Caco-2 (cell line): ENCODE measurements at regions of chr17 and their contacts with region 1.

Region 1: GRCh38 chr17:13297183-13297582 is 279.4 kb upstream of the ELAC2 start:
- DNase-seq: peak; percentile 76 to 82
- H3K4me3 ChIP-seq: no peak overlapping the region
- H3K4me3 Mint-ChIP-seq: peak overlapping the region; percentile 19
- H3K27ac Mint-ChIP-seq: peak overlapping the region; percentile 72
- H3K4me1 ChIP-seq: peaks cover 14% of the 10 kb centered on the region; the same call in 1 of the 2 replicates
- H3K4me1 Mint-ChIP-seq: peaks cover 7% of the 10 kb centered on the region
- H3K27me3 ChIP-seq: no peaks in the 10 kb centered on the region
- H3K27me3 Mint-ChIP-seq: no peaks in the 10 kb centered on the region
- CTCF ChIP-seq: no peak

Region 2: DNA sequence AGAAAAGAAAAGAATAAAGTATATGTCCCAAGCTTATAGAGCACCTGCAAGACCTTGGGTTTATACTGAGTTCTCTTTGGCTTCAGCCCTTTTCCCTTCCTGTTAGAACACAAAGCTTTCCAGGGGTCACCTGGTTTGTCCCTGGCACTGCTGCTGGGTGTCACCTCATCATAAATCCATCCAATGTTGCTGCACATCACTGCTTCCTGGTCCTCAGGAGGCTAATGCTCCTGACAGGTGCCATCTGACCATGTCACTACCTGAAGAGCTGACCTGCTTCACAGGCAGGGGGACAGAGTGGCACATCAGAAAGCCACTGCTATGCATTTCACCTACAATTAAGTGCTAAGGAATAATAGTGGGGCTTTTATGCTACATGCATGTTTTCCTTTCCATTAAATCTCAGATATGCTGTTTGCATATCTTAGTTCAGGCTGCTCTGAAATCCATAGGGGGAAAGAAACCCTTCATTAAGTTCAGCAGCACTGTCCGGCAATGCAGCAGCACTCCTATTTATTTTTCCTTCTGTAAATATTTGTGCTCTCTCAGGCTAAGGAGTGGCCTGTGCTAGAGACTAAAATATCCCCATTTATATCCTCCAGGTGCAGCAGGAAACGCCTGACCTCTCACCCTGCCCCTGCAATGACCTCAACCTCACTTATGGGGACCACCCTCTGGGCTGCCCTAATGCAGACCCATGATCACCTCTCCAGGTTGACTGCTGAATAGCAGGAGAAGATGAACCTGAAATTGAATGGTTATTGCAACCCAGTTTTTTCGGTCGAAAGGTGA is 114.5 kb before region 1 on chr17:
- CTCF ChIA-PET with region 1: no interaction called
- POLR2A ChIA-PET with region 1: no interaction called
- intact Hi-C with region 1: loop called (anchors 2 kb)
- DNase-seq: peak; percentile 41 to 55
- H3K4me3 ChIP-seq: no peak overlapping the region
- H3K4me3 Mint-ChIP-seq: no peak overlapping the region
- H3K27ac Mint-ChIP-seq: no peak overlapping the region
- H3K4me1 ChIP-seq: no peaks in the 10 kb centered on the region; the same call in 1 of the 2 replicates
- H3K4me1 Mint-ChIP-seq: peaks cover 9% of the 10 kb centered on the region
- H3K27me3 ChIP-seq: no peaks in the 10 kb centered on the region
- H3K27me3 Mint-ChIP-seq: no peaks in the 10 kb centered on the region
- CTCF ChIP-seq: no peak

Region 3: DNA sequence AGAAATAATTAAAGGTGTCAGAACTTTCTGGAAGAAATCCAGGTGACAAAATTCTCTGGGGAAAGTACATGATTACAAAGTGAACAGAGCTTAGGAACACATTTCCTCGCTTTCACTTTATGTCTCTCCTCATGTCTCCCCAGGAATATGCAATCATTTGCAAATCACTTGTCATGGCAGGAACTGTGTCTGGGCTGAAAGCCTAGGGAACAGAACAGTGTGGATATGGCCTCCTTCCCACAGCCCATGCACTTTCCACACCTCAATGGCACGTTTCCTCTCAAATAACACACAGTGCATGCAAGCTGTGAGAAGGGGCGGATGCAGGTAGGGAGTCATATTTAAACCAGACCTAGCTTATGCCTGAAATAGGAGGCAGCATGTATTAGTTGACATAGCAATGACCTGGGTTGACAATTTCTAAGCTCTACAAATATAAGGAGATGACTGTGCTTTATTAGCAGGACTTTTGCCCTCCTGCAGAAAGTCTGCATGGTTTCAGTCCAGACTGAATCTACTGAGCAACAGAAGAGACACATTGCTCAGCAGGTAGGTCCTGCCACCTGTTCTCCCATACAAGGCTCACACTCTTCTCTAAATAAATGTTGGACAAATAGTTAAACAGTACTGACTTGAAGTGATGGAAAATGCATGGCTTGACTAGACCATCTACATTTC is 43.3 kb before region 1 on chr17:
- CTCF ChIA-PET with region 1: no interaction called
- POLR2A ChIA-PET with region 1: interaction called, 4 read pairs
- intact Hi-C with region 1: loop called (anchors 1 kb)
- DNase-seq: peak; percentile 31 to 37
- H3K4me3 ChIP-seq: no peak overlapping the region
- H3K4me3 Mint-ChIP-seq: peak overlapping the region; percentile 16
- H3K27ac Mint-ChIP-seq: peak overlapping the region; percentile 50
- H3K4me1 ChIP-seq: no peaks in the 10 kb centered on the region
- H3K4me1 Mint-ChIP-seq: peaks cover 11% of the 10 kb centered on the region
- H3K27me3 ChIP-seq: no peaks in the 10 kb centered on the region
- H3K27me3 Mint-ChIP-seq: no peaks in the 10 kb centered on the region
- CTCF ChIP-seq: no peak

Region 4: DNA sequence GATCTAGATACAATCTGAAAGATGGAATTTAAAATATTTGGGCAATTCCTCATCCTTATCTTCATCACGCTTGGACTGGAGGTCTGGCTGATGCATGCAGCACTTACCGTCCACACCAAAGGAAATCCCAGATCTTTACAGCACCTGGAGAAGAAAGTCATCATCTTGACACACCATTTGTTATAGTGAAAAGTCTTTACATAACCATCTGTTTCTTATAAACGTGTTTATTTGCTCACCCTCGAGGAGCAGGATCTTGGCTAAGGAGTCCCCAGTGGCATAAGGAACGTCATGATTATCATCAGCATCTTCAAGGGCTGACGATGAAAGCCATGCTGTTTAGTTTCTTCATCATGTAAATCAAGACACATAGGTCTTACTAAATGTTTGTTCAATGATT is 30.6 kb before region 1 on chr17:
- CTCF ChIA-PET with region 1: no interaction called
- POLR2A ChIA-PET with region 1: no interaction called
- intact Hi-C with region 1: loop called (anchors 2 kb)
- DNase-seq: peak; percentile 1 to 32
- H3K4me3 ChIP-seq: no peak overlapping the region
- H3K4me3 Mint-ChIP-seq: no peak overlapping the region
- H3K27ac Mint-ChIP-seq: no peak overlapping the region
- H3K4me1 ChIP-seq: 0 out of 2 replicates have a peak, but pooled peaks cover 4% of the 10 kb centered on the region
- H3K4me1 Mint-ChIP-seq: no peaks in the 10 kb centered on the region
- H3K27me3 ChIP-seq: no peaks in the 10 kb centered on the region
- H3K27me3 Mint-ChIP-seq: no peaks in the 10 kb centered on the region
- CTCF ChIP-seq: no peak